B cell (primary cell): ENCODE measurements at regions of chr6 and their contacts with region 1.

Region 1: DNA sequence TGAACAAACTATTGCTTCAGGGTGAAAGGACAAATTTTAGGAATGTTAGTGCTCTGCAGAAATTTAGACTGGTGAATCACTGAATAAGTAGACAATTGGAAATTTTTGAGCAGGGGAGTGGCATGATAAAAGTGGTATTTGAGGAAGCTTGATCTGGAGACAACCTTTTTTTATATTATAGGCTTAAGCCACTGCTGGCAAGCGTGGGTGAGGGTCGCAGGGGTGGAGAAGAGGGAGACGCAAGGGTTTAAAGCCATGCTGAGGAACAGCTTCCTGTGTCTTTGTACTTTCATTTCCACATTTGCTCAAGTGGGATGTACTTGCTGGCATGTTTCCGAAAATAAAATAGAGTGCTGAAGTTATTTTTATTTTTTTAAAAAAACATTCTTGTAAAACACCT is 23.7 kb downstream of the NCOA7 start:
- DNase-seq: no peak
- ATAC-seq: no peak
- H3K4me3 ChIP-seq: peak overlapping the region in 2 of 5 experiments; percentile 1 to 25
- H3K4me3 Mint-ChIP-seq: peak overlapping the region; percentile 69
- H3K27ac ChIP-seq: no peak overlapping the region
- H3K27ac Mint-ChIP-seq: peak overlapping the region; percentile 22
- H3K4me1 ChIP-seq: peaks cover 19 to 47% of the 10 kb centered on the region in 2 donors
- H3K4me1 Mint-ChIP-seq: peaks cover 66% of the 10 kb centered on the region
- H3K27me3 ChIP-seq: no peaks in the 10 kb centered on the region
- H3K27me3 Mint-ChIP-seq: no peaks in the 10 kb centered on the region
- CTCF ChIP-seq: no peak

Region 2: GRCh38 chr6:125798734-125799508 is 15.6 kb before region 1 on chr6:
- CTCF ChIA-PET with region 1: interaction called, 4 read pairs
- POLR2A ChIA-PET with region 1: no interaction called
- intact Hi-C with region 1: loop called (anchors 2 kb)
- DNase-seq: peak; percentile 78
- ATAC-seq: peak; percentile 86
- H3K4me3 ChIP-seq: peak overlapping the region in 1 of 5 experiments; percentile 32
- H3K4me3 Mint-ChIP-seq: peak overlapping the region; percentile 60
- H3K27ac ChIP-seq: peak overlapping the region in 1 of 2 donors; percentile 36
- H3K27ac Mint-ChIP-seq: peak overlapping the region; percentile 80
- H3K4me1 ChIP-seq: peaks cover 26 to 50% of the 10 kb centered on the region in 2 donors
- H3K4me1 Mint-ChIP-seq: peaks cover 55% of the 10 kb centered on the region
- H3K27me3 ChIP-seq: peaks cover 0 to 4% (median 0%) of the 10 kb centered on the region in 4 experiments
- H3K27me3 Mint-ChIP-seq: peaks cover 3% of the 10 kb centered on the region
- CTCF ChIP-seq: no peak